Activated naive CD4-positive, alpha-beta T cell treated with anti-CD3 and anti-CD28 coated beads for 36 hours (primary cell): ENCODE measurements at regions of chr3 and their contacts with region 1.

Region 1: GRCh38 chr3:18389108-18389733 is 35.9 kb downstream of the SATB1 start:
- DNase-seq: no peak
- H3K4me3 Mint-ChIP-seq: no peak overlapping the region
- H3K27ac Mint-ChIP-seq: no peak overlapping the region
- H3K4me1 Mint-ChIP-seq: peaks cover 77% of the 10 kb centered on the region
- H3K27me3 Mint-ChIP-seq: no peaks in the 10 kb centered on the region

Region 2: DNA sequence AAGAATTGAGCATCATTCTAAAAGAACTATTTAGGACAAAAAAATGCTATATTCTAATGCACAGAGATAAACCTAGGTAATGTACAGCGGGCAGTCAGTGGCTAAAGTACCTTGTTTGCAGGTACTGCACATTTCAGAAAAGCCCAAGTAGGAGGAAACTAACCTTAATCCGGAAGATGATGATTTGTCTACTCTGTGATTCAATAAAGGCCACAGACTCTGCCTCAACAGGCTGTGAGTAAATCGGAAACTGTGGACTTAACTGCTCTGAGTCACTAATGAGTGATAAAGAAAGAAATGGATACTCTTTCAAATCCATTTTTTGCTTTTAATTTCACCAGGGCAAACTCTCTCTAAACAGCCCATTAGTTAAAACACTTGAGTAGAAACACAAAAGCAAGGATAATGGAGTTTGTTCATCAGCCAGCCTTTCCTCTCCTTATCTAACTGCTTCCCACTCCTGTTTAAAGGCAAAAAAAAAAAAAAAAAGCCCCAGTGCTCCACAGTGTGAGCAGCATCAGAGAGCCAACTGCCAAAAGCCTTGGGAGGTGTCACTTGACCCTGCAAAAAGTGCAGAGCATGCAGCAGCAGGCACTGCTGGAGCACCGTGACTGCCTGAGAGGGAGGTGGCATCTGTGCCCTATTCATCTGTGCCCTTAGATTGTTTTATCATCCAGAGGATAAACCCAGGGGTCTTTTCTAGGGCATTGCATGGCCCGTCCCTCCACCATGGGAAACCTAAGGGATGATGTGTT is 151.8 kb before region 1 on chr3:
- CTCF ChIA-PET with region 1: no interaction called
- intact Hi-C with region 1: loop called (anchors 5 kb)
- DNase-seq: peak; percentile 15
- H3K4me3 Mint-ChIP-seq: no peak overlapping the region
- H3K27ac Mint-ChIP-seq: no peak overlapping the region
- H3K4me1 Mint-ChIP-seq: no peaks in the 10 kb centered on the region
- H3K27me3 Mint-ChIP-seq: peaks cover 12% of the 10 kb centered on the region

Region 3: DNA sequence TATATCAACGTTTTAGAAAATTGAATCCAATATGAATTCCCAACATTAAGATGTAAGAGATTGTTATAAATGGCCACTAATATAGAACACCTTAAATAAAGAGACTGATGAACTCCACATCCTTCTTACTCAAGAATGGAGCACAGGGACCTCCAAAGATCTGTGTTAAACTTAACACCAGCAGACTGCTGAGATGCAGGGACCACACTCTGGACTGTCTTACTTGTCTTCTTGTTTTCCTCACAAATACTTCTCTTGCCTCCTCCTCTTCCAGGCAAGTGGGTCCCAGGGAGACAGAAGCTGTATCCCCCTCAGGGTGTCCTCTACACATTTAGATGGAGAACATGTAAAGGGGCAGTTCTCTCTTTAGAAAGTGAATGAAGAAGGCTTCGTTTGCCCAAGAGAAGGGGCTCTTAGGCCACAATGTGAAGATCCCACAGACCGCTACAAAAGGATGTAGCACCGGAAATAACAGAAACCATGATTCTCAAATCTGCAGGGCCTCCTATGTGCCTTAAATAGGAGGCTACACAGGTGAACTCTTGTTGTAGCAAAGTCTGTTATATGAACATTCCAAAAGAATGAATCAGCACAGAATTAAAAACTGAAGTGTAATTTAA is 16.3 kb before region 1 on chr3:
- CTCF ChIA-PET with region 1: interaction called, 10 read pairs
- intact Hi-C with region 1: loop called (anchors 1 kb)
- DNase-seq: no peak
- H3K4me3 Mint-ChIP-seq: no peak overlapping the region
- H3K27ac Mint-ChIP-seq: peak overlapping the region; percentile 57
- H3K4me1 Mint-ChIP-seq: peaks cover 93% of the 10 kb centered on the region
- H3K27me3 Mint-ChIP-seq: no peaks in the 10 kb centered on the region

Region 4: DNA sequence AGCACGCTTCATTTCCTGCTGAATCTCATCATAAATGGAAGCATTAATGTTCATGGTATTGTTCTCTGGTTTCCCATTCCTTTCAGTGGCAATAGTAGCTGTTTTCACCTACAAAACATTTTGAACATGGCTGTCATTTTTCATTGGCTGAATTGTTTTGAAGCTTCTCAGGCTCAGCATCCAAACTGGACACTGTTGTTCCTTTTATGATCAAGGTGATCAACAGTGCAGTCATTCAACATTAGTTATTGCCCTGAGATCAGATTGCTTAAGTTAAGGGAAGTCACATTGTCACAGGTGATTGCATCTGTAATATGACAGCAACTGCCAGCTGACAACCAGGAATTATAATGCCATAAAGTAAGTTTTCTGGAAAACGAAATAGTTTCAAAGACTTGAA is 11.0 kb before region 1 on chr3:
- CTCF ChIA-PET with region 1: interaction called, 10 read pairs
- intact Hi-C with region 1: loop called (anchors 1 kb)
- DNase-seq: no peak
- H3K4me3 Mint-ChIP-seq: no peak overlapping the region
- H3K27ac Mint-ChIP-seq: peak overlapping the region; percentile 15
- H3K4me1 Mint-ChIP-seq: peaks cover 86% of the 10 kb centered on the region
- H3K27me3 Mint-ChIP-seq: no peaks in the 10 kb centered on the region

Region 5: GRCh38 chr3:18401300-18401961 is 12.2 kb after region 1 on chr3:
- CTCF ChIA-PET with region 1: interaction called, 21 read pairs
- intact Hi-C with region 1: no loop called
- DNase-seq: no peak
- H3K4me3 Mint-ChIP-seq: peak overlapping the region; percentile 49
- H3K27ac Mint-ChIP-seq: peak overlapping the region; percentile 87
- H3K4me1 Mint-ChIP-seq: peaks cover 96% of the 10 kb centered on the region
- H3K27me3 Mint-ChIP-seq: no peaks in the 10 kb centered on the region